Cardiac septum (tissue), 1 donor: ENCODE measurements at regions of chr10 and their contacts with region 1.

Region 1: GRCh38 chr10:22436884-22437619 is 91.8 kb downstream of the SPAG6 start:
- DNase-seq: peak; percentile 94

Region 2: DNA sequence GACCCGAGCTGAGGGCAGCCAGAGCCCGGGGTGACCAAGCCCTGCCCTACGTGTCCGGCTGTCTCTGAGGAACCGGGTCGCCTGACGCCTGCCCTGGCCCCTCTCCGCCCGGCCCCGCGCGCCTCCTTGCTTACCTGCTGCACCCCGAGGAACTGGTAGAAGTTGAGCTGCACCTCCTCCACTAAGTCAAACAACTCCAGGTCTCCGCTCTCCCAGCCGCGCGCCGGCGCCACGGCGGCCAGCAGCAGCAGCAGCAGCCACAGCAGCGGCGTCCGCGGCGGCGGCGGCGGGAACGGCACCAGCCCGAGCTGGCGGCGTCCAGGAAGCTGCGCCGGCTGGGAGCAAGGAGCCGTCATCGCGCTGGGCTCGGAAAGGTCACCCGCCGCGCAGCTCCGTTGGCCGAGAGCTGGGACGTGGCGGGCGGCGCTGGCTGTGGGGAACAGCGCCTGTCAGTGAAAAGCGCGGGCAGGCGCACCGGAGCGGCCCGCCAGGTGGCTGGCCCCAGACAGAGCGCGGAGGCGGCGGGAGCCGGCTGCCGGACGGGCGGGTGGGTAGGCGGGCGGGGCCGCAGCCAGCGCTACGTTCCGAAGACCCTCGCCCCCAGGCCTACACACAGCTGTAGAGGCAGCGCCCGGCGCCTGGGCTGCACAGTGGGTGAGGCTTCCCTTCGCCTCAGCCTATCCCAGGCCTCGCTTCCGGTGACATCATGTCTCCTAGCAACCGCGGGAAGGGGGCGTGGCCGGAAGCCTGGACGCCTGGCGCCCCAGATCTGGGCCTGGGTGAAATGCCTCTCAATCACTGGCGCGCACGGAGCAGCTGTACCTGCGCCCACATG is 433.8 kb before region 1 on chr10 and contains the start of gene DNAJC1:
- intact Hi-C with region 1: loop called (anchors 2 kb)
- DNase-seq: peak; percentile 99
- total RNA-seq, gene DNAJC1: 12.9 TPM

Region 3: GRCh38 chr10:22251751-22252223 is 185.3 kb before region 1 on chr10:
- intact Hi-C with region 1: loop called (anchors 2 kb)
- DNase-seq: peak; percentile 88

Region 4: DNA sequence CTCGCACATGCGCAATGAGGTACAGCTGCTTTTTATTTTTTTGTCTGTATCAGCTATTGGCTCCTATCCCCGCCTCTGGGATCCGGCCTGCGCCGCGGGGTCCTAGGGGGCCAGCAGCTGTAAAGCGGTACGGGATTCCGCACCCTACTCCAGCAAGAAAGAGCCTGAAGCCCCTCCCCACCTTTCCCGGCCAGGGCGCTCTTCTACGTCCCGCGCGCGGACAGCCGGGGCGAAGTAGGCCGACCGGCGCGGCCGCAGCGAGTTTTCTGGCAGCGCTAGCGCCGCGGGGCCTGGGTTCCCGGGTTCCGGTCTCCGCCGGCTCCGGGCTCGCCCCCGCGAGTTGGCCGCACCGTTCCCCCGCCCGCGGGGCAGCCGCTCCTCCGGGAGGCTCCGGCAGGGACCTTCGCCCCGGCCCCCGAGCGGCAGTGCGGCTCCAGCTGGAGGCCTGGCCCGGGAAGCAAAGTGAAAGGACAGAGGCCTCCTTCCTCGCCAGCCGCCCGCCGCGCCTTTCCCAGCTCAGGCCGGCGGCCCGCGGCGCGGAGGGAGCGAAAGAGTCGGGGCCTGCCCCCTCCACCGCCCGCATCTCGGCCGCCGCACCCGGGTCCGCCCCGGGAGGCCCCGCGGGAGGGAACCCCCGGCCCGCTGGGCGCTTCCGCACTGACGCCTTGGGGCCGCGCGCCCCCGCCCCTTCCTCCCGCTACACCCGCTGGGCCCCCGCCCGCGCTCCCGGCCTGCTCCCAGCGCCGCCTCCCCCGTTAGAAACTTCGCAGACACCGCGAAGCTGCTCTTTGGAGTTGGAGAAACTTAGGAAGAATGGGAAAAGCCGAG is 96.5 kb before region 1 on chr10:
- intact Hi-C with region 1: loop called (anchors 2 kb)
- DNase-seq: peak; percentile 87

Region 5: DNA sequence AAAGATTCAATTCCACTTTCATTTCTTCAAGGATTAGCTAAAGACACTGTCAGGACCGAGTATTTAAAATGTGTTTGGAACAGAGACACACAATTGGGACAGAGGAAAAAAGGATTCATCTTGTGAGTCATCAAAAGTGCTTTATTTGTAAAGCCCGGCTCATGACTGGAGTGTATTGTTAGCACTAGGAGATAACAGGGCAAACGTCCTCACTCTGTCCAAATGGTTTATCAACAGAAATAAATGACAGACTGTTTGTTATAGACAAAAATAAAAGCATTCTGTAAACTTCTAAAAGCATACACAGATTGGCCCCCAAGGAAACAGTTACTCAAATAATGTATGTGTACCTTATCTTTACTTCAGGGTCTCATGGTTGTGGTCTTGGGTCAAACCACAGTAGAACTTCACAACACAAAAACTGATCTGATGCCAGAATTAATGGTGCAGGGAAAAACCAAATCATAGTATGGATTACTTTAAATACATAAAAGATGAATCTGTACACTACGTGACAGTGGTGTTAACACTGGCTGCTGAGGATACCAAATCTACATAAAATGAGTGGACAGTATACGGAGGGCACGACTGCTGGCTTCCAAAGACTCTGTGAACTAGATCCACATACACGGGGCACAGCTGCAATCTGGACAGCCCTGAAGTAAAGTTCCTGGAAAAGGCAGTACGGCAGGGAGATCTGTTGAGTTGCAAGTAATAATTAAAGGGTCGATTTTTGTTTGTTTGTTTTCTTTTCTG is 98.0 kb after region 1 on chr10:
- intact Hi-C with region 1: no loop called
- DNase-seq: no peak

Region 6: DNA sequence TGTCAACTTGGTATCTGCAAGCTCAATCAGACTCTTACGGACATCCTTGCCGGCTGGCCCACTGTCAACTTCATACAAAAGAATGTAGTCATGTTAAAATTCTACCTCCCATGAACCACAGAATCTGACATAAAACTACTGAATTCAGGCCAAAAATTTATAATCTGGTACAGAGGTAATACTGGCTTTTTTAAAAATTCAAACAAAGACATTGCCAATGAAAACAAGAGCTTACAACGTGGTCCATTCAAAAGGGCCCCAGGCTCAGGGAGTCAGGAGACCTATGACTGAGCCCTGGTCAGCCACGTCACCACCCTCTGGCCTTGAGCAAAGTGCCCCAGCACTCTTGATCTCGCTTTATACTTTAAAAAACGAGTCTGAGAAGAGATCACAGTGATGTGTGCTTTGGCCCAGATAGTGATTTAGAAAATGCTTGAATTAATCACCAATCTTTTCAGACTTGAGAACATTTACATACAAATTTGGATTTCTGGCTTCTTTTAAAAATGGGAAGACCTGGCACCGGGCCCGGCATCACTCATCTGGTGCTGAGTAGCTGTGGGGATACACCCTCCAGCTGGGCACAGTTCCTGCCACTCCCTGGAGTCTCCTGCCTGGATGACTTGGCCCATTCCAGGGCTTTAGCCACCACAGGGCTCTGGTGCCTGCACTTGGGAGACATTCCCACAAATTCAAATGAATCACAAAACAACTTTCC is 183.2 kb after region 1 on chr10:
- intact Hi-C with region 1: no loop called
- DNase-seq: no peak